ENCODE measurements at regions of chr22 and their contacts with region 1.

Region 1: GRCh38 chr22:18024276-18024947 is at the start of gene MICAL3:
- DNase-seq: peak; percentile 87
- CTCF ChIP-seq: peak; percentile 94

Region 2: DNA sequence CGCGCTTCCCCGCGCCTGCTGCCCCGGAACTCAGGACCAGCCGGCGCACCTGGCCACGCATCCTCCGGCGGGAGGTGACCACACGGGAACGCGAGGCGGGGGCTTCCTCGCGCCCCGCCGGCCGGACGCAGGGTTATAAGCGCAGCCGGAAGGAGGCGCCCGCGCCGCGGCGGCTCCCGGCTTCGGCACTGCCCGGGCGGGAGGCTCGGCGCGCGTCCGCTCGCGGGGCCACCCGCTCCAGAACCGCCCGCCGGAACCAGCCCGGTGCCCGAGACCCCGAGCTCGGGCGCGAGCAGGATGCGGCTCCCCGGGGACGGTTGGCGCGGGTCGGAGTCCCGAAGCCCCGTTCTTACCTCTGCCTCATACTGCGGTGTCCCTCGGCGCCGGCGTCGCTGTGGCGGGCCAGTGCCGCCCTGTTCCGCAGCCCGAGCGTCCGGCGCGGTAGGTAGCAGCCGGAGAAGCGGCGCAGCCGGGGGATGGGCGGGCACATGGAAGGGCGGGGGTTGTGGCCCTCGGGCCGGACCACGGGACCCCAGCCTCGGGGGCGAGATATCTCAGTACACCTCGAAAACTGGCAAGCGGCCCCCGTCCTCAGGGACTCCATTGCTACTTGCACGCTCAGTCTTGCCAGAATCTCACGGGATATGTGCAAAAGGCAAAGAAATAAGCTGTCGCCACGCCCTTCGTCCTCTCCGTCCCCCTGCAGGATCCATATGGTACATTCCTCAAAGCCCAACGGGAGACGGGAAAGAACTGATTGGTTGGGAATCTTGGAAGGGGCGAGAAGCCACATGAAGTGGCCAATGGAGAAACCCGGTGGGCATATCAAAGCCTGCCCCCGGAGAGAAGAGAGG is 23.1 kb before region 1 on chr22:
- CTCF ChIA-PET with region 1: interaction called, 11 read pairs
- POLR2A ChIA-PET with region 1: no interaction called
- DNase-seq: peak; percentile 91
- CTCF ChIP-seq: peak; percentile 59

Region 3: GRCh38 chr22:18012531-18012930 is 11.9 kb before region 1 on chr22:
- CTCF ChIA-PET with region 1: interaction called, 15 read pairs
- POLR2A ChIA-PET with region 1: no interaction called
- DNase-seq: no peak
- CTCF ChIP-seq: no peak

Region 4: GRCh38 chr22:18057568-18058209 is 33.3 kb after region 1 on chr22:
- CTCF ChIA-PET with region 1: interaction called, 20 read pairs
- POLR2A ChIA-PET with region 1: interaction called, 3 read pairs
- DNase-seq: peak; percentile 75
- CTCF ChIP-seq: no peak

Measured in GM10248 (cell line).